AG04450 (cell line): ENCODE measurements at regions of chr5 and their contacts with region 1.

Region 1: GRCh38 chr5:172984243-172984953 is 827 bp downstream of the ATP6V0E1 start:
- DNase-seq: peak; percentile 76
- H3K4me3 ChIP-seq: peak overlapping the region; percentile 96
- H3K27ac ChIP-seq: peak overlapping the region; percentile 95
- H3K27me3 ChIP-seq: no peaks in the 10 kb centered on the region
- CTCF ChIP-seq: peak; percentile 83

Region 2: GRCh38 chr5:173041881-173042762 is 57.7 kb after region 1 on chr5:
- CTCF ChIA-PET with region 1: no interaction called
- POLR2A ChIA-PET with region 1: interaction called, 16 read pairs
- DNase-seq: peak; percentile 73
- H3K4me3 ChIP-seq: no peak overlapping the region
- H3K27ac ChIP-seq: peak overlapping the region; percentile 84
- H3K27me3 ChIP-seq: no peaks in the 10 kb centered on the region
- CTCF ChIP-seq: no peak

Region 3: DNA sequence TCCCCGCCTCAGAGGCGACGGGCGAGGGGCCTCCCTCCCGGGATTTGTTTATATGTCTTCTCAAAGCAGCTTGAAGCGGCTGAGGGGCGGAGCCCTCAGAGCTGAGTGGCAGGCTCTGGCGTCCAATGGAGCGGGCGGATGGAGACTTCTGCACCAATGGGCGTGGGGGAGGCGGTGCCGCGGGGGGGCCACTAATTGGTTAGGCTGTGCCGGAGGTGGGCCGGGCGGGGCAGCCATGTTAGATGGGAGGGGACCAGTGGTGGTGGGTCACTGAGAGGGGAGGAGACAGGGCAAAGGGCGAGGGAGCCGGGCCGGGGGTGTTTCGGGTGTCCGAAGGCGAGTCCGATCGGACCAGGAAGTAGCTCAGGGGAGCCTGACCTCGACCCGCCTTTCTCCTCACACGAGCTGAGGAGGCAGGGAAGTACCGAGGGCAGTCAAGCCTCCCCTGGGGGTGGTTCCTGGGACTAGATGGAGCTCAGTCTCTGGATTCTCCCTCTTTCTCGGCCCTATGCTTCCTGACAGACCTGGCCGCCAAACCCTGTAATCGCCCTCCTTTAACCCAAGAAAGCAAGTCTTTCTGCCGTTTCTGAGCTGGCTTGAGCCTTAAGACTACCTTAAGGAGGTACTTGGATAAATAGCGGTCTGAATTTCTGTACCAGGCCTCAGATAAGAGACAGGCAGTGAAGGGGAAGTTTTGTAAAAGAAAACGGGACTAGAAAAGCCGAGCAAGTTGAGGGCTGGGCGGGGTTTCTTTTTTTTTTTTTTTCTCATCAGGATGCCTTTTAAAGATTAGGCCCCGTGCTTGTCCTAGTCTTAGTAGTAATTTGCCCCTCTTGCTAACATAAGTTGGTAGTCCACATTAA is 72.9 kb after region 1 on chr5:
- CTCF ChIA-PET with region 1: interaction called, 12 read pairs
- POLR2A ChIA-PET with region 1: interaction called, 25 read pairs
- DNase-seq: peak; percentile 97
- H3K4me3 ChIP-seq: peak overlapping the region; percentile 83
- H3K27ac ChIP-seq: peak overlapping the region; percentile 93
- H3K27me3 ChIP-seq: no peaks in the 10 kb centered on the region
- CTCF ChIP-seq: peak; percentile 35

Region 4: GRCh38 chr5:173138707-173139106 is 154.3 kb after region 1 on chr5:
- CTCF ChIA-PET with region 1: interaction called, 19 read pairs
- POLR2A ChIA-PET with region 1: no interaction called
- DNase-seq: no peak
- H3K4me3 ChIP-seq: no peak overlapping the region
- H3K27ac ChIP-seq: no peak overlapping the region
- H3K27me3 ChIP-seq: no peaks in the 10 kb centered on the region
- CTCF ChIP-seq: no peak

Region 5: GRCh38 chr5:173144200-173145176 is 160.1 kb after region 1 on chr5 and contains the start of gene BNIP1:
- CTCF ChIA-PET with region 1: interaction called, 19 read pairs
- POLR2A ChIA-PET with region 1: no interaction called
- DNase-seq: peak; percentile 91
- H3K4me3 ChIP-seq: peak within 1 kb of the TSS; percentile 100
- H3K27ac ChIP-seq: peak within 1 kb of the TSS; percentile 69
- H3K27me3 ChIP-seq: no peaks in the 10 kb centered on the region
- CTCF ChIP-seq: peak; percentile 99
- polyA plus RNA-seq, gene BNIP1: 23.5 TPM in 2 replicates